ENCODE measurements at regions of chr11 and their contacts with region 1.

Region 1: DNA sequence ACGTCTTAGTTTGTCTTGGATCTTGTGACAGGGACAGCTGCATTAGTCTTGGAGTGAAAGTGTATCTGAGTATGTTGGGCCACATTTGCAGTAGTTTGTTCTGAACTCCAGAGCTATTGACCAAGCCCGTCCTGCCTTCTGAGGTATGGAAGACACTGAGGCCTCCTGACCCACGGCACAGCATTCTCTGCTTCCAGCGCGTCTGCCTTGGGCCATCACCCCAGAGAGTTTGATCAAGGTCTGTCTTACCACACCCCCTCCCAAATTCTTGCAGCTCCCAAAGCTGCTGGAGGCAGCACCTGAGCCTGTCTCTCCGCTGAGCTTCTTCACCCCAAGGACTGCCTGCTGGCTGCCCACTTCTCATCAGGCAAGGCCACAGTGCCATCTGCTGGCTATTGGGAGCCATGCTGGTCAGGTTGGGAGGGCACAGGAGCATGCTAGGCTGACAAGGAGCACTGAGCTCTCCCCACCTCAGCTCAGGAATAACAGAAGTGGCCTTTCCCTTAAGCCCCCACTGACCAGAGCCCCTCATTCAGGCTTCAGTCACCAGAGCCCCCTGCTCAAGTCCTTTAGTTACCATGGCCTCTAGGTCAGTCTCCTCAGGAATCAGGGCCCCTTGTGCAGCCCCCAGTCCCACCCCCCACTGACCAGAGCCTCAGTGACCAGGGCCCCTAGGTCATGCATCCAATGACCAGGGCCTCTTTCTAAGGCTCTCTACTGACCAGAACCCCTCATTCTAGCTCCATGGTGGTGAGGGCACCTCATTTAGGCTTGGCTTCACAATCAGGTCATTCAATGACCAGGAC is 27.2 kb upstream of the SMPD1 start:
- DNase-seq: peak; percentile 78
- CTCF ChIP-seq: peak; percentile 86

Region 2: DNA sequence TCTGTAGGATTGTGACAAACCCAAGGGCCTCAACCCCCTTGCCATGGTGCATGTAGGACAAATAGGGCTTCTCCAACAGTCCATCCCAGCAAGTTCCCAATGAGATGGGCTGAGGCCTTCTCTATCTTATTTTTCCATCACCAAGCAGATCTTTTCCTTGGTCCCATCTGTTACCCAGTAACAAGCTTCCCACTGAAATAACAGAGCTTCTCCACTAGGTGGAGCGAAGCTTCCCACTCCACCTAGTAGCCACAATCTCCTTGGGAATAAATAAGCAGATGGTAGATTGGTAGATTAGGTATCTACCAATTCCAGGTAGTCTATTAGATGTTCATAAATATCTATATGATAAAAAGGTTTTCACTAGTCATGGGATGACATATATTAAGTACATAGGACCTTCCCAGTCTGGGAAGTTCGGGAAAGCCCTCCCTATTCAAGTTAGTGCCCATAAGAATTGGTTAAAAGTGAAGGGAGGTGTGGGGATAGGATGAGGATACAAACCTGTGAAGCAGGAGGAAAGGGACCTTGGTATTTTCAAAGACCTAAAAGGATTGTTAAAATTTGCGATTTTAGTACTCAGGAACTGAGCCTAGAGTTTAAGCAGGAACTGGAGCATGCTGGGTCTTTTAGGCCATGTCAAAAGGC is 370.3 kb before region 1 on chr11:
- CTCF ChIA-PET with region 1: interaction called, 10 read pairs
- POLR2A ChIA-PET with region 1: no interaction called
- DNase-seq: peak; percentile 29
- CTCF ChIP-seq: peak; percentile 40

Region 3: DNA sequence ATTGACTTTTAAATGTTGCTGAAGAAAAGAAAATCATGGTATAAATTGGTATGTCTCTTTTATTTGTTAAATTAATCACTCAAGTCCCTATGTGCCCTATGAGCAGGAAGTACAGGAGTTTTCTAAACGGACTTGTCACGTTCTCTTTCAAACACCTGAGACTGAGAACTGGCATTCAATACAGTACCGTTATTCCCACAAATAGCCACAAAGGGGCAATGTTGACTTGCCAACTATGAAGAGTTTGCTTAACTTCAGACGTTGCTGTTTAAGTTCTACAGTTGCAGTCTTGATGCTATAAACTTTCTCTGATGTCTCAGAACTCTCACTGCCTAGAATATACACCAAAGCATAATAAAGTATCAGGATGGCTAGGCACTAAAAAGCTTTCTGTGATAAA is 340.1 kb before region 1 on chr11:
- CTCF ChIA-PET with region 1: interaction called, 11 read pairs
- POLR2A ChIA-PET with region 1: no interaction called
- DNase-seq: no peak
- CTCF ChIP-seq: peak; percentile 29

Region 4: GRCh38 chr11:6099577-6099976 is 263.5 kb before region 1 on chr11:
- CTCF ChIA-PET with region 1: no interaction called
- POLR2A ChIA-PET with region 1: no interaction called
- DNase-seq: no peak
- CTCF ChIP-seq: no peak

Region 5: GRCh38 chr11:6234387-6235107 is 128.5 kb before region 1 on chr11 and contains the start of gene FHIP1B:
- CTCF ChIA-PET with region 1: interaction called, 10 read pairs
- POLR2A ChIA-PET with region 1: no interaction called
- DNase-seq: peak; percentile 96
- CTCF ChIP-seq: no peak

Region 6: GRCh38 chr11:6315811-6316425 is 47.2 kb before region 1 on chr11:
- CTCF ChIA-PET with region 1: interaction called, 24 read pairs
- POLR2A ChIA-PET with region 1: no interaction called
- DNase-seq: peak; percentile 68
- CTCF ChIP-seq: peak; percentile 75

Region 7: GRCh38 chr11:6321961-6322362 is 41.1 kb before region 1 on chr11:
- CTCF ChIA-PET with region 1: interaction called, 24 read pairs
- POLR2A ChIA-PET with region 1: no interaction called
- DNase-seq: no peak
- CTCF ChIP-seq: no peak